ENCODE measurements at regions of chr6 and their contacts with region 1.

Region 1: GRCh38 chr6:31652925-31653718 is 661 bp upstream of the BAG6 start:
- DNase-seq: no peak
- H3K4me3 Mint-ChIP-seq: peak overlapping the region; percentile 100
- H3K27ac Mint-ChIP-seq: peak overlapping the region; percentile 98
- H3K4me1 Mint-ChIP-seq: peaks cover 36% of the 10 kb centered on the region
- H3K27me3 Mint-ChIP-seq: no peaks in the 10 kb centered on the region
- CTCF ChIP-seq: no peak

Region 2: DNA sequence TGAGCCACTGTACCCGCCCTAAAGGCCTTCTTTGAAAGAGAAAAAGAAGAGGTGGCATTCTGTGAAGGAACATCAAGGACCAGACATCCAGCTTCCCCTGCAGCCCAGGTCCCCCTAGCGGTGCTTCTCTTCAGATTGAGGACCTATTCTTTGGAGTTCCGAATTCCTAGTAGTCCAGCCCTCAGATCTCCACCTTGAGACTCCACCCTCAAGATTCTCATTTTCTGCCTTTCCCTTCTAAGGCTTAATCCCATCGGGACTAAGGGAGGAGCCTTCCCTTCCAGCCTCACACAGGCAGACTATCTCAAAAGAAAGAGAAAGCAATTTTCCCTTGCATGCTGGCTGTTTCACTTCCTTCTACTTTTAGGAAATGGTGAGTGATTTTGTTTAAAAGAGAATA is 610.3 kb before region 1 on chr6:
- CTCF ChIA-PET with region 1: no interaction called
- POLR2A ChIA-PET with region 1: no interaction called
- intact Hi-C with region 1: no loop called
- DNase-seq: peak; percentile 66
- H3K4me3 Mint-ChIP-seq: no peak overlapping the region
- H3K27ac Mint-ChIP-seq: no peak overlapping the region
- H3K4me1 Mint-ChIP-seq: peaks cover 2% of the 10 kb centered on the region
- H3K27me3 Mint-ChIP-seq: no peaks in the 10 kb centered on the region
- CTCF ChIP-seq: peak; percentile 26

Region 3: GRCh38 chr6:31493875-31494694 is 159.0 kb before region 1 on chr6:
- CTCF ChIA-PET with region 1: interaction called, 3 read pairs
- POLR2A ChIA-PET with region 1: interaction called, 12 read pairs
- intact Hi-C with region 1: no loop called
- DNase-seq: peak; percentile 86
- H3K4me3 Mint-ChIP-seq: peak overlapping the region; percentile 64
- H3K27ac Mint-ChIP-seq: peak overlapping the region; percentile 37
- H3K4me1 Mint-ChIP-seq: peaks cover 36% of the 10 kb centered on the region
- H3K27me3 Mint-ChIP-seq: no peaks in the 10 kb centered on the region
- CTCF ChIP-seq: peak; percentile 81

Region 4: GRCh38 chr6:31619805-31620585 is 33.1 kb before region 1 on chr6:
- CTCF ChIA-PET with region 1: interaction called, 4 read pairs
- POLR2A ChIA-PET with region 1: interaction called, 117 read pairs
- intact Hi-C with region 1: no loop called
- DNase-seq: peak; percentile 99
- H3K4me3 Mint-ChIP-seq: peak overlapping the region; percentile 76
- H3K27ac Mint-ChIP-seq: peak overlapping the region; percentile 89
- H3K4me1 Mint-ChIP-seq: peaks cover 17% of the 10 kb centered on the region
- H3K27me3 Mint-ChIP-seq: no peaks in the 10 kb centered on the region
- CTCF ChIP-seq: no peak

Region 5: GRCh38 chr6:31665501-31666336 is 12.6 kb after region 1 on chr6 and contains the start of gene CSNK2B:
- CTCF ChIA-PET with region 1: interaction called, 9 read pairs
- POLR2A ChIA-PET with region 1: interaction called, 263 read pairs
- intact Hi-C with region 1: loop called (anchors 1 kb)
- DNase-seq: peak; percentile 98
- H3K4me3 Mint-ChIP-seq: peak within 1 kb of the TSS; percentile 99
- H3K27ac Mint-ChIP-seq: peak within 1 kb of the TSS; percentile 99
- H3K4me1 Mint-ChIP-seq: peaks cover 31% of the 10 kb centered on the region
- H3K27me3 Mint-ChIP-seq: no peaks in the 10 kb centered on the region
- CTCF ChIP-seq: no peak
- total RNA-seq, gene CSNK2B: 197 and 209 TPM in 2 replicates

Region 6: GRCh38 chr6:31806465-31807272 is 153.5 kb after region 1 on chr6 and contains the start of gene LSM2:
- CTCF ChIA-PET with region 1: no interaction called
- POLR2A ChIA-PET with region 1: interaction called, 12 read pairs
- intact Hi-C with region 1: no loop called
- DNase-seq: peak; percentile 98
- H3K4me3 Mint-ChIP-seq: peak within 1 kb of the TSS; percentile 82
- H3K27ac Mint-ChIP-seq: peak within 1 kb of the TSS; percentile 84
- H3K4me1 Mint-ChIP-seq: peaks cover 6% of the 10 kb centered on the region
- H3K27me3 Mint-ChIP-seq: no peaks in the 10 kb centered on the region
- CTCF ChIP-seq: peak; percentile 27
- total RNA-seq, gene LSM2: 36.9 and 47.4 TPM in 2 replicates

Region 7: GRCh38 chr6:31827286-31828079 is 174.4 kb after region 1 on chr6 and contains the start of gene HSPA1B:
- CTCF ChIA-PET with region 1: no interaction called
- POLR2A ChIA-PET with region 1: interaction called, 36 read pairs
- intact Hi-C with region 1: no loop called
- DNase-seq: peak; percentile 100
- H3K4me3 Mint-ChIP-seq: peak within 1 kb of the TSS; percentile 78
- H3K27ac Mint-ChIP-seq: peak within 1 kb of the TSS; percentile 99
- H3K4me1 Mint-ChIP-seq: peaks cover 13% of the 10 kb centered on the region
- H3K27me3 Mint-ChIP-seq: no peaks in the 10 kb centered on the region
- CTCF ChIP-seq: no peak
- total RNA-seq, gene HSPA1B: 29.8 and 51.6 TPM in 2 replicates

Region 8: GRCh38 chr6:31901953-31902643 is 249.0 kb after region 1 on chr6 and contains the start of gene ZBTB12:
- CTCF ChIA-PET with region 1: interaction called, 3 read pairs
- POLR2A ChIA-PET with region 1: interaction called, 11 read pairs
- intact Hi-C with region 1: no loop called
- DNase-seq: peak; percentile 93
- H3K4me3 Mint-ChIP-seq: peak within 1 kb of the TSS; percentile 67
- H3K27ac Mint-ChIP-seq: peak within 1 kb of the TSS; percentile 33
- H3K4me1 Mint-ChIP-seq: peaks cover 24% of the 10 kb centered on the region
- H3K27me3 Mint-ChIP-seq: no peaks in the 10 kb centered on the region
- CTCF ChIP-seq: no peak
- total RNA-seq, gene ZBTB12: 3.6 and 4.0 TPM in 2 replicates

Measured in MCF 10A (cell line).